Right ventricle myocardium superior (tissue), 1 donor: ENCODE measurements at regions of chr11 and their contacts with region 1.

Region 1: DNA sequence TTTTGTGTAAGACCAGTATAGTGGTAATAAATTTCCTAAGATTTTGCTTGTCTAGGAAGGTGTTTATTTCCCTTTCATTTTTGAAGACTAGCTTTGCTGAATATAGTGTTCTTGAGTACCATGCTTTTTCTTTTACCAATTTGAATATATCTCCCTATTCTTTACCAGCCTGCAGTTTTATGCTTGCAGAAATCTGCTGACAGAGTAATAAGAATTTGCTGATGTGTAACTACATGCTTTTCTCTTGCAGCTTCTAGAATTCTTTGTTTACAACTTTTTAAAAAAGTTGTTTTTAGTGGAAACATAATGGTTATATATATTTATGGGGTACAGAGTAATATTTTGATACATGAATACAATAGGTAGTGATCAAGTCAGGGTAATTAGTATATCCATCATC is 324.8 kb upstream of the FOLH1 start:
- DNase-seq: no peak
- ATAC-seq: no peak

Region 2: GRCh38 chr11:49230511-49230910 is 302.7 kb before region 1 on chr11:
- intact Hi-C with region 1: loop called (anchors 10 kb)
- DNase-seq: no peak
- ATAC-seq: peak; percentile 36

Region 3: DNA sequence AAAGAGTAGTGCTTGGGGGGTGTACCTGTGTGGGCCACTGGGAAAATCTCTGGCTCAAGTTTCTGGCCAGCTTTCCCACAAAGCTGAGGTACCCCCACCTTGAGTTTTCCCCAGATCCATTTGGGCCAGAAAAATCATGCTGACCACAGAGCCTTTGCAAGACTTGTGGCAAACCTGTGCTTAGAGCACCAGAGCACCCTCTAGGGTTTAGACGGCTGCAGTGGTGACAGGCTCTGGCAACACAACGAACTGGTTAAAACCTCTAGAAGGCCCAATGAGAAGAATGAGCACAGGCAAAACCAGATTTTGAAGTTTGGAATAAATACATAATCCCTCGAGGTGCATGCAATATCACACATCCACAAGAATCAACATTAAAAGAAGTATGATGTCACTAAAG is 34.1 kb before region 1 on chr11:
- intact Hi-C with region 1: no loop called
- DNase-seq: no peak
- ATAC-seq: no peak

Region 4: DNA sequence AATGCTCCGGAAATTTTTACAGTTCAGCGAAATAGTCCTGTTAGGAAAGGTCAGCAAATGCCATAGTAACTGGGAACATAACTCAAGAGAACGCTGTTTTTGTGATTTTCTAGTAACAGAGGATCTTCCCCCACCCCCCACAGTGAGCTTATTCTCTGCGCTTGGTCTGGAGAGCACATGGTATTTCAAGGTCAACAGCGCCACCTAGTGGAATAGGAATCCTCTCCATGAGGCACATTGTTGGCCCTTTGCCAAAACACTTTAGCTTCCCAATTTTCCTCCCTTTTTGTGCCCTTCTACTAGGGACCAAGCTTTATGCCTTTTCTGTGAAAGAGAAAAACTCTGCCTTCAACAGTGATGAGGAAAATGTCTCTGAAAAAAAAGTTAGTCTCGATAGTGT is 462.4 kb after region 1 on chr11:
- intact Hi-C with region 1: no loop called
- DNase-seq: no peak
- ATAC-seq: no peak